ENCODE measurements at regions of chr7 and their contacts with region 1.

Region 1: DNA sequence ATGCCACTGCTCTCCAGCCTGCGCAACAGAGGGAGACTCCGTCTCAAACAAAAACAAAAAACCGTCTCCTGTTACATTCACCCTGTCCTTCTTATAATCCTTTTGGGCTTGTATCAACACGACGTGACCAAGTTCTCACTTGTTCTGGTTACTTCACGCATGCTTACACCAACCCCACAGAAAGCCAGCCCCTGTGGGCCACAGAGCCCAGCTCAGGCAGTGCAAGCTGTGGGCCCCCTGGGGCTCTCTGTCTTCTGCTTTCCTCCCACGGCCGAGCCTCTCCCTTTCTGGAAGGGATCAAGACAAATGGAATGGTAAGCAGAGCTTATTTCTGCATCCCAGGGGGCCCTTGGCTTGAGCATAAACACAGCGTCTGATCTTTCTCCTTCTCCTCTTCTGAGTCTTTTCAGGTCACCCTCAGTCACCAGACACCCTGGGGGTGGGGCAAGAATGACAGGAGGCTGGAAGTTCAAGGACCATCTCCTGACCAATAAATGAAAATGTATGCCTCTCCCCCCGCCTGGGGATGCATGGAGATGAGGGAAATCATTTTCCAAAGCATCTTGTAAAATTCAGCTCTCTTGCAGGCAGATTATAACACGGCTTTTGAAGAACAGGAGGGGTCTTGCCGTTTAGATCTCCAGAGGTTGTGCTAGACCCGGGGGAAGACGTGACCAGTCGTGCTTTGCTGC is 19.0 kb upstream of the TRIM56 start:
- DNase-seq: peak in 1 of 10 donors; percentile 23
- H3K4me3 ChIP-seq: no peak overlapping the region
- H3K27ac ChIP-seq: no peak overlapping the region
- H3K27me3 ChIP-seq: peaks cover 0 to 34% (median 5%) of the 10 kb centered on the region in 45 donors
- CTCF ChIP-seq: no peak

Region 2: DNA sequence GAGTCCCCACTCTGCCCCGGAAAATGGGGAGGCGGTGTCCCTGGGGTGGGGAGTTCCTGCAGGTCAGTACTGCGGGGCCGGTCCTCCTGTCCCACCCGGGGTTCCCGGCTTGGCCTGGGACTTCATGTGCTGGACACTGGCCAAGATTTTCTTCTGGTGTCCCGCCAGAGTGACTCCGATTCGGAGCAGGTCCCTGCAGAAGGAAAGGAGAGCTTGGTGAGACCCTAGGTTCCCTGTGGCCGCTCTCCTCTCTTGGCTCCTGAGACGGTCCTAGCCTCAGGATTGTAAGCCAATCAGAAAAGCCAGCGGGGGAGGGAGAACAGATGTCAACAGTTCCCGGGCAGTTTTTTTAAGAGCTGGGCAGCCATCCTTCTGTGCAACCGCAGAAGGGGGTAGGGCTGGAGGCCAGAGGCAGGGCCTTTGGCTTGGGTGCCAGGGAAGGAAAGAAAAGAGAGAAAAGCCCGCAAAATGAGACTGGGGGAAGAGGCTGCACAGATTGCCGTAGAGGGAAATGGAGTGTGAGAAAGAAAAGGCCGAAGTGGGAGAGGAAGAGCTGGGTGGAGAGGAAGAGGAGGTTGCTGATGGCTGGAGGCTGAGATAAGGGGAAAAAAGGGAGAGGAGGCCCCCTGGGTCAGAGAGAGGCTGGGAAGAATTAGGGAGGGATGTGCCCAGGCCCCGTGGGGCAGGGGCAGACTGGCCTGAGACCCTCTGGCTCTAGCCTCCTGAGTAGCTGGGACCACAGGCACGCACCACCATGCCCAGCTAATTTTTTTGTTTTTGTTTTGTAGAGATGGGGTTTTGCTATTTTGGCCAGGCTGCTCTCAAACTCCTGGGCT is 262.7 kb before region 1 on chr7:
- intact Hi-C with region 1: loop called in 1 of 2 experiments (anchors 10 kb)
- DNase-seq: peak; percentile 34 to 82 (median 68)
- H3K4me3 ChIP-seq: peak overlapping the region in 28 of 59 donors; percentile 1 to 44 (median 24)
- H3K27ac ChIP-seq: peak overlapping the region in 8 of 59 donors; percentile 11 to 55 (median 38)
- H3K27me3 ChIP-seq: peaks cover 0 to 3% (median 0%) of the 10 kb centered on the region in 45 donors
- CTCF ChIP-seq: no peak

Measured in dorsolateral prefrontal cortex (tissue), 120 donors.